ENCODE measurements at regions of chr6 and their contacts with region 1.

Region 1: DNA sequence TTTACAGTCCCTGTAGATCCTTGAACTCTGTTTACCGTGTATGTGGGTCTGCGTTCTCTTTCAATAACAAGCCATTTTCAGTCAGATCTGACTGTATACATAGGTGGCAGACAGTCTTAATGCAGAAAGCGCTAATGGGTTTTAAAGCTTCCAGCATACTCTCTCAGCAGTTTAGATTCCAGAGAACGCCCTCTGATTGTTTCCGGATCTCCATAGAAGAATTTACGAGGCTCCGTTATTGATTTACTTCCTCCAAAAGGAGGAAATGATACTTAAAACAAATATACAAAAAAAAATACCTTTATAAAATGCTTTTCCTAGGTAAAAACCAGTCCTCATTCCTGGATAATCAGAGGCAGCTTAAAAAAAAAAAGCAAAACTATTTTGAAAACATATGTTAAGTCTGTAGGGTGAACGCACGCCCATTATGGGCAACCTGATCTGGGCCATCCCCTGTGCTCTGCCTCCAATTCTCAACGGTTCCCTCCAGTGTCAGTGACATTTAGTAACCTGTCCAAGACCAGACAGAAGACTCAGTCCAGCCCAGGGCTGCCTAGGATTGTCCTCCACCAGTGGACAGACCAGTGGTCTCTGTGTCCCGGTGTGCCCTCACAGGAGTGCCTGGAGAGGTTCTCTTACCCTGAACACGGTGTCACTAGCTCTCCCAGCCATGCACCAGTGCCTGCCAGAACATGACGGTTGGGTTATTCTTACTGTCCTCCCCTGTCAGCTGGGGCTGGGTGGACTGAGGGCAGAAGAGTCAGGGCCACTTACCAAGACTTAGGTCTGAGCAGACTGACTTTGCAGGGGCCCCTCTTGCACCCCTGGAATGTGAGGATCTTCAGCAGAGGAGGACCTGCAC is 217.3 kb downstream of the ARID1B start:
- DNase-seq: peak; percentile 79
- ATAC-seq: peak; percentile 64
- H3K4me3 ChIP-seq: peak overlapping the region; percentile 56
- H3K27ac ChIP-seq: peak overlapping the region; percentile 70
- H3K4me1 ChIP-seq: peaks cover 42% of the 10 kb centered on the region
- H3K27me3 ChIP-seq: no peaks in the 10 kb centered on the region
- CTCF ChIP-seq: no peak

Region 2: DNA sequence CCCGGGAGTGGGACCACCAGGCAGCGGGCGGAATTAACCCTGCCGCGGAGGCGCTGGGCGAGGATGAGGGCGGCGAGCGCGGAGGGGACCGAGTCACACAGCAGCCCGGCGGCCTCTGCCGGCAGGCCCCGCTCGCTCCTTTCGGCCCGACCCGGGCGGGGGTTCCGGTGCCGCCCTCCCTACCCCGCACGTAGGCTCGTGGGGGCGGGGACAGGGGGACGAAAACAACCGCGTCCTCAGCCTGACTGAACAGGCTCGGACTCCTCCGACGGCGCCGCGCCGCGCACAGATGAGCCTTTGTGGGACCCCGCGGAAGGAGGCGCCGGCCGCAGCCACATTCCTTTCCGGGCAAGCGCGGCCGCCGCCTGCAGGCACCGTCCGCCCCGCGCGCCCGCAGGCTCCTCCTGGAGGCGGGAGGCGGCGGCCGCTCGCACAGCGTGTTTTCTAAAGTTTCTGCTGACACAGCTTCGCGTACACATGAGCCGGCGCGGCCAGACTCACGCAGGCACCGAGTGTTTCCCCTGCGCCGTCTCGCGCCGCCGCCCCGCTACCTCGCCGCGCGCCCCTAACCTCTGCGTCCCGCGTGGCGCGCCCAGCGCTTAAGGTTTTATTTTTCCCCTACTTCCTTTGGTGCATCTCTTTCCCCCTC is 27.0 kb after region 1 on chr6:
- CTCF ChIA-PET with region 1: no interaction called
- POLR2A ChIA-PET with region 1: no interaction called
- intact Hi-C with region 1: loop called (anchors 2 kb)
- DNase-seq: peak; percentile 80
- ATAC-seq: peak; percentile 84
- H3K4me3 ChIP-seq: peak overlapping the region; percentile 92
- H3K27ac ChIP-seq: peak overlapping the region; percentile 90
- H3K4me1 ChIP-seq: peaks cover 8% of the 10 kb centered on the region
- H3K27me3 ChIP-seq: no peaks in the 10 kb centered on the region
- CTCF ChIP-seq: peak; percentile 40; the same call in 1 of the 2 replicates

Region 3: DNA sequence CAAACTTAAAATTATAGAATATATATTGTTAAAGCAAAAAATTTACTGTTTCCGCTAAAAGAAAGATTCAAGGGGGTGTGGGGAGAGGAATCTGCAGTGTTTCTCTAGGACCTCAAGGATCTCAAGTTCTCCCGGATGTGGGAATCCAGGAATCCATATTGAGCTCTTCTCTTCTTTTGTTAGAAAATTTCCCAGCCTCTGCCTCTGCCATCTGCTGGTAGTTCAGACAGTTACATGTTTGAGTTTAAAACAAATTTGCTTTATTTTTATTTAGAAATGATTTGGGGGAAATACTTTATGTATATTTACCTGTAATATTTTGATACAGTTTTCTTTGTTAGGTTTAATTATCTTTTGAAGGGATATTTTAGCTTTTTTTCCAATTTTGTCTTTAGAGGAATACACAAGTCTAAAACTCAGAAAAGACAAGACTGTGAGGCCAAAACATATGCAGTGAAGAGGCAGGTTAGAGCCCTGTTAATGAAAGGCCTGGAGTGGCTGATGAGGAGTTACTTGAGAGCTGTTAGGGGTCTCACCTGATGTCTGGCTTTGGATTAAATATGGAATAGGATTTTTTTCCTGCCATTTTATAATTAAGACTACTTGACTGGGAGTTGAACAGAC is 51.5 kb after region 1 on chr6:
- CTCF ChIA-PET with region 1: no interaction called
- POLR2A ChIA-PET with region 1: no interaction called
- intact Hi-C with region 1: no loop called
- DNase-seq: peak; percentile 60
- ATAC-seq: peak; percentile 38; the same call in 1 of the 2 replicates
- H3K4me3 ChIP-seq: no peak overlapping the region
- H3K27ac ChIP-seq: no peak overlapping the region
- H3K4me1 ChIP-seq: peaks cover 10% of the 10 kb centered on the region; the same call in 1 of the 2 replicates
- H3K27me3 ChIP-seq: no peaks in the 10 kb centered on the region
- CTCF ChIP-seq: peak; percentile 64

Measured in PC-3 (cell line).